ENCODE measurements at regions of chr3 and their contacts with region 1.

Region 1: DNA sequence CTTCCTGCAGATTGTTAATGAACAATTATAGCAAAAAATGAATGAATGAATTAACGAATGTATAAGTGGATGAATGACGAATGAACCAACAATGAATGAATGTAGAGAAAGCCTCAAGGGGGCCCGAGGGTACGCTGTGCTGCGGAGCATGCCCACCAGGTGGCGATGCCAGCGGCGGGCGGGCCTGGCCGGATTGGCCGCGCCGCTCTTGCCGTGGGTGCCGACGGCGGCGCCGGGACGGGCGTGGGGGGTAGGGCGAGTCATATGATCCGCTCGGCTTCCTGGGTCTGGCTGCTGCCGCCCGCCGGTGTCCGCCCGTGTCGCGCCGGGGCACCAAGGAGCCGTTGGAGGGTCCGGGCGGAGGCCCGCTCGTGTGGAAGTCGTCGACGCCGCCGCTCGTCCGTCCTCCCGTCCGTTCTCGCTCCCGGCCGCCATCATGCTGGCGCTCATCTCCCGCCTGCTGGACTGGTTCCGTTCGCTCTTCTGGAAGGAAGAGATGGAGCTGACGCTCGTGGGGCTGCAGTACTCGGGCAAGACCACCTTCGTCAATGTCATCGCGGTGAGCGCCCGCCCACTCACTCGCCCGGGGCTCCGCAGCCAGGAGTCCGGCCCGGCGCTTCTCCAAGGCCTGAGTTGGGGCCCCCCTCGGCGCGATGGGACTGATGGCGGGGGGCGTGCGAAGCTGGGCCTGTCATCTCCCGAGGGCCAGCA is at the start of gene ARL8B:
- DNase-seq: peak; percentile 95 to 97 (median 96)
- ATAC-seq: peak; percentile 96
- H3K4me3 ChIP-seq: peak within 1 kb of the TSS; percentile 99
- H3K27ac ChIP-seq: peak within 1 kb of the TSS; percentile 92
- H3K4me1 ChIP-seq: peaks cover 19 to 21% of the 10 kb centered on the region in 2 experiments
- H3K27me3 ChIP-seq: no peaks in the 10 kb centered on the region
- CTCF ChIP-seq: peak; percentile 99
- EP300 ChIP-seq: peak; percentile 82
- POLR2A ChIP-seq: peak; percentile 91
- RAD21 ChIP-seq: peak; percentile 61 to 75
- polyA plus RNA-seq, gene ARL8B: 47.8 to 49.6 TPM

Region 2: DNA sequence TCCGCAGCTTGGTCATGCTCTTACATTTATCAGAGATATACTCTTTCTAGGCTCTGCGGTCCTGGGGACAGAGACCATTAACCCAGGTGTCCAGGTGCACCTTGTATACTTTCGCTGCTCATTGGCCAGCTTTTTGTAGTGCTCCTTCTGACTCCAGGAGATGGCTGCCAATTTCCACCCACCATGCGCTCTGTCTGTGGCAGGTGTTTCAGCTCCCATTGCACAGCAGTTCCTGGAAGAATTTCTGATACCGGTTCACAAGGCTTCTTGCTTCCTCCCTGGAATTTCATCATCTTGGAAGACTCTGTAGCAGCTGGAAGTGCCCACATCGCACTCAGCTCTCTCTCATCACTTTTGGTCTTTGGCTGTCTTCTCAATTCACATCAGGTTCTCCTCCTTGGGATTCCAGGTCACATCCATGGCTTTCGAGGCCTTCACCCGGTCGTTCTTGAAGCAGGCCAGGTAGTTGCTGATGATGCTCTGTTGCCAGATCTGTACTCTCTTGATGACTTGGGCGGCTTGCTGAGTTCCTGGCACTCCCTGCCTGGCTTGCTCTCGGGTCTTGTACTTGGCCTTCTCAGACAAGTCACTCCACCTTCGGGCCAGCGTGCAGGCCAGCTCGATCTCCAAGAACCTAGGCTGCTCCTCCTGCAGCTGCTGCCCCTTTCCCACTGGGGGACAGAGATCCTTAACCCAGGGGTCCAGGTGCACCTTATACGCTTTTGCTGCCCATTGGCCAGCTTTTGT is 41.2 kb before region 1 on chr3:
- CTCF ChIA-PET with region 1: no interaction called
- POLR2A ChIA-PET with region 1: no interaction called
- in situ Hi-C with region 1: no loop called
- intact Hi-C with region 1: loop called (anchors 5 kb)
- DNase-seq: no peak
- ATAC-seq: no peak; the same call in 2 of the 3 replicates
- H3K4me3 ChIP-seq: no peak overlapping the region
- H3K27ac ChIP-seq: 0 out of 3 replicates have a peak overlapping the region, but pooled peaks have one; percentile 68
- H3K4me1 ChIP-seq: peaks cover 25 to 38% of the 10 kb centered on the region in 2 experiments
- H3K27me3 ChIP-seq: no peaks in the 10 kb centered on the region
- CTCF ChIP-seq: no peak
- EP300 ChIP-seq: no peak
- POLR2A ChIP-seq: no peak
- RAD21 ChIP-seq: no peak

Region 3: DNA sequence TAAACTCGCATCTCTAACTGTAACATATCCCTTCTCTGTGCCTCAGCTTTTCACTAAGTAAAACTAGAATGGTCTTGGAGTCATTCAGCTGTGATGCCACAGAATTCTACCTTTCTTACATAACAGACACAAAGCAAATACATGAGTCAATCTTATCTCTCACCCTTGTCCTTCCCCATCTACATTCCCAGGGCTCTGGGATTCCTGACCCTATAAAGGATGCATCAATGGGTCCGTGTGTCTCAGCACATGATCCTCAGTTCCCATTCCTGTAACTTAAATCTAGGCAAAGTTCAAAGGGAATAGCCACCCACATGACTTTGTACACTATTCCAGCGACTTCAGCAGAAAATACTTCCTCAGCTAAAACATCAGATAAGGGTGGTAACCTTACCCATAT is 11.8 kb before region 1 on chr3:
- CTCF ChIA-PET with region 1: interaction called, 3 read pairs
- POLR2A ChIA-PET with region 1: interaction called, 32 read pairs
- in situ Hi-C with region 1: no loop called
- intact Hi-C with region 1: no loop called
- DNase-seq: no peak
- ATAC-seq: no peak
- H3K4me3 ChIP-seq: no peak overlapping the region
- H3K27ac ChIP-seq: no peak overlapping the region
- H3K4me1 ChIP-seq: peaks cover 28 to 34% of the 10 kb centered on the region in 2 experiments
- H3K27me3 ChIP-seq: no peaks in the 10 kb centered on the region
- CTCF ChIP-seq: no peak
- EP300 ChIP-seq: no peak
- POLR2A ChIP-seq: no peak
- RAD21 ChIP-seq: no peak

Region 4: DNA sequence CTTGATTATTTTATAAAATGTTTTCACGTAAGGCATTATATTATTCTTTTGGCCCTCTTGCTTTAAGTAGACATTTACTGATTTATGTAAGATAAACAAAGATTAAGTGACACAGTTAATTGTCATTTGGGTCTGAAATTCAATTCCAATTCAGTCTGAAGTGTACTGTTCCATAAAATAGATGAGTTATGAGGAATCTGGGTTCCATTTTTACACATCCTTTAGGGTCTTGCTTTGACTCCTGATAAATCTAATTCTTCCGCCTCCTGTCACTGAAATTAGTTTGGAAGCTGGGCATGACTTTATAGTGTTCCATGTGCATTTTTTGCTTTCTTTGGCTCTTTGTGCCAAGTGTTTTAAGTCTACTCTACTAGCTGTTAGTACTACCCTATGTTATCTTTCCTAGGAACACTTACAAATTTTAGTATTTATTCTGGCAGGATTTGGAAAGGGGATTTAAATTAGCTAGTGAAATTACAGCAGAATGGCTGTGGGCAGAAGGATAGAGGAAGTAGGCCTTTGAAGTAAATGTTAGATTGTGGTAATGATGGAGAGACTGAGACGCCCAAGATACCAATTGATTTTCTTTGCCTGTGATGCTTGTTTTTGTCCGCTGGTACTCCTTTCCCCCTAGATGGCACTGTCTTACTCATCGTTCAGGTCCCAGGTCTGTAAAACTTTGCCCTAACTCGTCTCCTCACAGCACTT is 14.2 kb after region 1 on chr3:
- CTCF ChIA-PET with region 1: interaction called, 5 read pairs
- POLR2A ChIA-PET with region 1: interaction called, 27 read pairs
- in situ Hi-C with region 1: no loop called
- intact Hi-C with region 1: no loop called
- DNase-seq: peak in 2 of 4 experiments; percentile 52 to 55
- ATAC-seq: peak; percentile 78
- H3K4me3 ChIP-seq: no peak overlapping the region
- H3K27ac ChIP-seq: no peak overlapping the region
- H3K4me1 ChIP-seq: 0 out of 5 replicates have a peak, but pooled peaks cover 0 to 7% of the 10 kb centered on the region in 2 experiments
- H3K27me3 ChIP-seq: no peaks in the 10 kb centered on the region
- CTCF ChIP-seq: peak; percentile 46 to 73 (median 62)
- EP300 ChIP-seq: no peak
- POLR2A ChIP-seq: no peak
- RAD21 ChIP-seq: peak; percentile 48 to 65

Region 5: GRCh38 chr3:5633960-5634850 is 512.0 kb after region 1 on chr3:
- CTCF ChIA-PET with region 1: no interaction called
- POLR2A ChIA-PET with region 1: no interaction called
- in situ Hi-C with region 1: no loop called
- intact Hi-C with region 1: no loop called
- DNase-seq: no peak
- ATAC-seq: no peak
- H3K4me3 ChIP-seq: no peak overlapping the region
- H3K27ac ChIP-seq: no peak overlapping the region
- H3K4me1 ChIP-seq: no peaks in the 10 kb centered on the region; a peak in 1 of 5 replicates
- H3K27me3 ChIP-seq: no peaks in the 10 kb centered on the region
- CTCF ChIP-seq: no peak
- EP300 ChIP-seq: no peak
- POLR2A ChIP-seq: no peak
- RAD21 ChIP-seq: no peak